ENCODE measurements at regions of chrX and their contacts with region 1.

Region 1: DNA sequence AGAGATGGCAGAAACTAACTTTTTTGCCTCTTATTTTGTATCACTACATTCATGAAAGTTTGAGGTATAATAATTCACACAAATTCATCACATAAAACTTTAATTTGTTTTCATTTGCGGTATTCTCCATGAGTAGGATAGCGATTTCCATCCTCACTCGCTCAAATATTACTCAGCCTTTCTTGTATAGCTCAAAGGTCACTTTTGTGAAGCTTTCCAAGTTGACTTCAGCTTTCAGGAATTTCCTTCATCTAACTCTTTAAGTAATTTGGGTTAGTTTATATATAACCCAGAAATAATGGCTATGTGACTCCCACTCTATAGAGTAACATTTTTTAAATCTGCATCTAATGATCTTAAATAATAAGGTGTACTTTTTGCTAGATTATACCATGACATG is 314.4 kb downstream of the IL1RAPL1 start:
- DNase-seq: no peak
- H3K4me3 ChIP-seq: no peak overlapping the region
- H3K27ac ChIP-seq: no peak overlapping the region
- H3K4me1 ChIP-seq: no peaks in the 10 kb centered on the region
- H3K27me3 ChIP-seq: no peaks in the 10 kb centered on the region
- CTCF ChIP-seq: no peak

Region 2: GRCh38 chrX:28854637-28855036 is 47.0 kb before region 1 on chrX:
- CTCF ChIA-PET with region 1: no interaction called
- dilution Hi-C with region 1: loop called (anchors 5 kb)
- in situ Hi-C with region 1: no loop called
- intact Hi-C with region 1: no loop called
- DNase-seq: no peak
- H3K4me3 ChIP-seq: no peak overlapping the region
- H3K27ac ChIP-seq: no peak overlapping the region
- H3K4me1 ChIP-seq: no peaks in the 10 kb centered on the region
- H3K27me3 ChIP-seq: no peaks in the 10 kb centered on the region
- CTCF ChIP-seq: no peak